CD14-positive monocyte (primary cell): ENCODE measurements at regions of chr9 and their contacts with region 1.

Region 1: DNA sequence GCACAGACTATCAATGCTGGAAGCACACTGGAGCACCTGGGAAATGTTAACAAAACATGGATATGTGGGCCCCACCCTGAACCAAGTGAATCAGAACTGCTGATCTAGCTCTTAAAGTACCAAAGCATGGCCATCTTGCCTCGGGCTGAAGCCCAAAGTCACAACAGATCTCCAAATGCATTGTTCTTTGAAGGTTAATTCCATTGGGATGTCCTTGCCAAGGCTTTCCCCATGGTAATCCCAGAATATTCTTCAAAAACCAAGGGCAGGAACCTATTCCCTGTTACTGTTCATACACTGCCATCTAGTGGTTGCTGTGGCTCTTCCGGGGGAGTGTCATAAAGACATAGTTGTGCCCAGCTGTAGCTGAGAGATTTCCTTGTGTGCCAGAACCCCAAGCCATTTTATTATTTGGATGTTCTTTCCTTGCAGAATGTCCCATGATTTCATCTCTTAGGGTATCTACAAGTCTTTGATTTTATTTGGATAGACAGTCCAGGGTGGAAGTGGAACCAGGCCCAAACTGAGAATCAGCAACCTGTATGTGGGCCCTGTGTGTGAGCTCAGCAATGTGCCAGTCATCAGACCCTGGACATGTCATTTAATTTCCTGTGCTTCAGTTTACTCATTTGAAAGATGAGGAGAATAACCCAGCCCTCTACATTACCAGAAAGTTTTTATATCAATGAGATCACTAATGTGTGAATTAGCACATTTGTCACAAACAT is 290.0 kb downstream of the ACTL7B start:
- DNase-seq: peak; percentile 49 to 78 (median 70)
- H3K4me3 ChIP-seq: no peak overlapping the region
- H3K4me3 Mint-ChIP-seq: no peak overlapping the region
- H3K27ac ChIP-seq: no peak overlapping the region
- H3K27ac Mint-ChIP-seq: peak overlapping the region in 3 of 7 donors; percentile 15 to 37 (median 17)
- H3K4me1 ChIP-seq: no peaks in the 10 kb centered on the region
- H3K4me1 Mint-ChIP-seq: peaks cover 12% of the 10 kb centered on the region
- H3K27me3 ChIP-seq: no peaks in the 10 kb centered on the region
- H3K27me3 Mint-ChIP-seq: peaks cover 0 to 5% (median 3%) of the 10 kb centered on the region in 3 donors
- CTCF ChIP-seq: peak; percentile 94

Region 2: DNA sequence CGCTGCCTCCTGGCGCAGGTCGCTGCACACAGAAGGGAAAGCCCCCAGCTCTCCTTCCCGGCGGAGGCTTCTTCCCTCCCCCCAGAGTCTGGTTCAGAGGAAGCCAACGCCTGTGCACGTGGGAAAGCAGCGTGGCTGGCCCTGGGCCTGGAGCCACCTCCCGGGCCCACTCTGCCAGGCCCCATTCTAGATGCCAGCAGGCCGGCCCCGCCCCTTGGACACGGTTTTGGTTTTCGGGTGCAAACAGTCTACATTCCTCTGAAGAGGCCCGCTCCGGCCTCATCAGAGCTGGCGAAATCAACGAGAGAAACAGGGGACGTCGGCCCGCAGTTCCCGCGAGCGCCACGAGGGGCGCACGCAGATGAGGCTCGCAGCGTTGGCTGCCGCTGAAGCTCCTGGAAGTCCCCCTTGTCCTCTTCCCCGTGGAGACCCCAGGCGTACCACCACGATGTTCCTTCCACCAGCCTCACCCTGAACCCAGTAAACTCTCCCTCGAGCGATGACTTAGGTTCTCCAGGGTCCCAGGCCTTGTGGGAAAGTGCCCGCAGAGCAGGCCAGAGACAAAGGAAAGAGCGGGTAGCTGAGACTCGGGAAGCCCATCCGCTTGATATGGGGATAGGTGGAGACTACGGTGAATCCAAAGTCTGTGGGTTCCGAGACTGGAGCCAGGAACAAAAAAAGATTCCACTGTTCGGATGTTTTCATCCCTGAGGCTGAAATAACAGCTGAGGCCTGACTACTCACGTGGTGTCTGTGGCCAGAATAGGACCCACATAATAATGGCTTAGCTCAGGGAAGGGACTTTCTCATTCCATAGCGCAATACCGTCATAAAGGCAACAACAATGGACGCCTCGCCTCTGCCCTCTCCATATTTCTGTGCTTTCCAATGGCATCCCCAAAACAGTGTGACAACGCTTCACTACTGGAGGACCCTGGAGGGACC is 1140.4 kb before region 1 on chr9:
- intact Hi-C with region 1: loop called in 1 of 2 experiments (anchors 10 kb)
- DNase-seq: peak; percentile 43 to 56 (median 56)
- H3K4me3 ChIP-seq: peak overlapping the region; percentile 1 to 74 (median 33)
- H3K4me3 Mint-ChIP-seq: peak overlapping the region; percentile 77 to 87
- H3K27ac ChIP-seq: no peak overlapping the region
- H3K27ac Mint-ChIP-seq: peak overlapping the region in 2 of 7 donors; percentile 35 to 46
- H3K4me1 ChIP-seq: peaks cover 5 to 9% of the 10 kb centered on the region in 2 donors
- H3K4me1 Mint-ChIP-seq: peaks cover 8% of the 10 kb centered on the region
- H3K27me3 ChIP-seq: no peaks in the 10 kb centered on the region
- H3K27me3 Mint-ChIP-seq: peaks cover 2 to 6% (median 3%) of the 10 kb centered on the region in 3 donors
- CTCF ChIP-seq: peak; percentile 98

Region 3: GRCh38 chr9:107465467-107466451 is 1100.1 kb before region 1 on chr9:
- intact Hi-C with region 1: loop called (anchors 5 kb)
- DNase-seq: peak; percentile 69 to 82 (median 78)
- H3K4me3 ChIP-seq: peak overlapping the region; percentile 71 to 95 (median 89)
- H3K4me3 Mint-ChIP-seq: peak overlapping the region; percentile 87 to 93
- H3K27ac ChIP-seq: peak overlapping the region in 1 of 2 donors; percentile 79
- H3K27ac Mint-ChIP-seq: peak overlapping the region in 6 of 7 donors; percentile 77 to 93 (median 81)
- H3K4me1 ChIP-seq: peaks cover 10 to 18% of the 10 kb centered on the region in 2 donors
- H3K4me1 Mint-ChIP-seq: peaks cover 18% of the 10 kb centered on the region
- H3K27me3 ChIP-seq: no peaks in the 10 kb centered on the region
- H3K27me3 Mint-ChIP-seq: peaks cover 5 to 14% (median 11%) of the 10 kb centered on the region in 3 donors
- CTCF ChIP-seq: peak; percentile 98

Region 4: GRCh38 chr9:107472581-107473340 is 1093.1 kb before region 1 on chr9:
- intact Hi-C with region 1: loop called (anchors 5 kb)
- DNase-seq: no peak
- H3K4me3 ChIP-seq: no peak overlapping the region
- H3K4me3 Mint-ChIP-seq: no peak overlapping the region
- H3K27ac ChIP-seq: no peak overlapping the region
- H3K27ac Mint-ChIP-seq: no peak overlapping the region
- H3K4me1 ChIP-seq: peaks cover 11 to 22% of the 10 kb centered on the region in 2 donors
- H3K4me1 Mint-ChIP-seq: peaks cover 23% of the 10 kb centered on the region
- H3K27me3 ChIP-seq: no peaks in the 10 kb centered on the region
- H3K27me3 Mint-ChIP-seq: peaks cover 0 to 4% (median 0%) of the 10 kb centered on the region in 3 donors
- CTCF ChIP-seq: no peak

Region 5: DNA sequence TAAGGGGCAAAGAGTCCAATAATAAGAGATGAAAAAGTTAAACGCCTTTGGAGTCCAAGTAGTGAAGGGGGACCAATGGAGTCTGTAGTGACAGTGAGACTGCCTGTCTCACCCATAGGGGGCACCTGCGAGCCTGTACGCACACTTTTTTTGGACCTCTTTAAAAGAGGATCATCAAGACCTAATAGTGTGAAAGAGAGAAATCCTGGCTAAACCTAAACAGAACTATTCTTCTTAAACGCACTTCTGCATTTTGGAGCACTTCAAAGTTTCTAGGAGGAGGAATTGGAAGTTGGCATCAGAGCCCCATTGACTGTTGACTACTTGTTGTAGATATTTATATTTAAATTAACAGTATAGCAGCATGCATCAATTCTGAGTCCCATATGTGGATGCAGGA is 440.2 kb before region 1 on chr9:
- intact Hi-C with region 1: no loop called
- DNase-seq: peak; percentile 4 to 25 (median 20)
- H3K4me3 ChIP-seq: no peak overlapping the region
- H3K4me3 Mint-ChIP-seq: no peak overlapping the region
- H3K27ac ChIP-seq: no peak overlapping the region
- H3K27ac Mint-ChIP-seq: no peak overlapping the region
- H3K4me1 ChIP-seq: peaks cover 0 to 4% of the 10 kb centered on the region in 2 donors
- H3K4me1 Mint-ChIP-seq: peaks cover 8% of the 10 kb centered on the region
- H3K27me3 ChIP-seq: no peaks in the 10 kb centered on the region
- H3K27me3 Mint-ChIP-seq: peaks cover 0 to under 1% (median 0%) of the 10 kb centered on the region in 3 donors
- CTCF ChIP-seq: peak; percentile 32

Region 6: DNA sequence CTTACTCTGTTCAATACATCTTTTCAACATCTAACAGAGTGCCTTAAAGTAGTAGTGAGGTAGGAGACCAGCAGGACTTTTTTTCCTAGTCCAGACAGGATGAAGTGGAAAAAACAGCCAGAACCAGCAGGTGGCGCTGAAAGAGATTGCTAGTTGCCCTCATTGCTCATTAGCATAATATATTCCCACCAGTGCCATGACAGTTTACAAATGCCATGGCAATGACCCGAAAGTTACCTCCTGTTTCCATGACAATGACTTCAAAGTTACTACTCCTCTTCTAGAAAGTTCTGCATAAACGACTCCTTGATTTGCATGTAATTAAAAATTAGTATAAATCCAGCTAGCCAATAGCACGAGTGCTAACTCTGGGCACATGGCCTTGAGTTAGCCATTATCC is 97.4 kb before region 1 on chr9:
- intact Hi-C with region 1: loop called in 1 of 2 experiments (anchors 5 kb)
- DNase-seq: peak; percentile 12 to 47 (median 45)
- H3K4me3 ChIP-seq: peak overlapping the region in 1 of 3 experiments; percentile 1
- H3K4me3 Mint-ChIP-seq: no peak overlapping the region
- H3K27ac ChIP-seq: no peak overlapping the region
- H3K27ac Mint-ChIP-seq: peak overlapping the region in 1 of 7 donors; percentile 20
- H3K4me1 ChIP-seq: peaks cover 20 to 21% of the 10 kb centered on the region in 2 donors
- H3K4me1 Mint-ChIP-seq: peaks cover 25% of the 10 kb centered on the region
- H3K27me3 ChIP-seq: no peaks in the 10 kb centered on the region
- H3K27me3 Mint-ChIP-seq: peaks cover 0 to 10% (median 0%) of the 10 kb centered on the region in 3 donors
- CTCF ChIP-seq: peak; percentile 47

Region 7: GRCh38 chr9:108609227-108609896 is 43.5 kb after region 1 on chr9:
- intact Hi-C with region 1: no loop called
- DNase-seq: no peak
- H3K4me3 ChIP-seq: no peak overlapping the region
- H3K4me3 Mint-ChIP-seq: no peak overlapping the region
- H3K27ac ChIP-seq: no peak overlapping the region
- H3K27ac Mint-ChIP-seq: no peak overlapping the region
- H3K4me1 ChIP-seq: no peaks in the 10 kb centered on the region
- H3K4me1 Mint-ChIP-seq: peaks cover 6% of the 10 kb centered on the region
- H3K27me3 ChIP-seq: no peaks in the 10 kb centered on the region
- H3K27me3 Mint-ChIP-seq: peaks cover 0 to 2% (median 1%) of the 10 kb centered on the region in 3 donors
- CTCF ChIP-seq: no peak

Region 8: DNA sequence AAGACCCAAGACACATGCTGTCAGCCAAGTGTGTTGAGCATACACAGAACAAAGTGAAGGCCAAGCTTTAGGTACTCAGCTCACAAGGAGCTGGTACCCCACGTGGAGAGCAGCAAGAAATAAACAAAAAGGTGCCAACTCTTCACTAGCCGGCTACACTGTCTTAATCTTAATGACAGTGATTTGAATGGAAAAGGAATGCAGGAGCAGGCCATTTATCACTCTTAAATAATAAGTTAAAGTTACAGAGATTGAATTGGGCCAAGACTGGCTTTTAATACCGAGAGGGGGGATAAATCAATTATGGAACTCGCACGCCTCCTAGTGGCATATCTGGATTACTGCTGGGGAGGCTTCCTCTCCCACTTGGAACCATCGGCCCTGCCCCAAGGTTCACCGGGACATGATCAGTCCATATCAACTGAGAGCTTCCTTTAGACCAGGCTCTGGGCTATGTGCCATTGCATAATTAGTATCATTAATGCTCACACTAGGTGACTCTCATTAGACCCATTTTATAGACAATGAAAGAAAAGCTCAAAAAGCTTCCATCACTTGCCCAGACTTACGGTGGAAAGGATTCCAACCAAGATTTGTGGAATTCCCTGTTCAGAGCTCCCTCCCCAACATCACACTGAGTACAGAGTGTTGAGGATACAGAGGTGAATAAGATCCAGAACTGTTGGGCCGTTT is 196.0 kb after region 1 on chr9:
- intact Hi-C with region 1: loop called (anchors 10 kb)
- DNase-seq: peak; percentile 48 to 69 (median 56)
- H3K4me3 ChIP-seq: no peak overlapping the region
- H3K4me3 Mint-ChIP-seq: peak overlapping the region in 1 of 2 donors; percentile 26
- H3K27ac ChIP-seq: no peak overlapping the region
- H3K27ac Mint-ChIP-seq: peak overlapping the region in 1 of 7 donors; percentile 55
- H3K4me1 ChIP-seq: peaks cover 7 to 12% of the 10 kb centered on the region in 2 donors
- H3K4me1 Mint-ChIP-seq: peaks cover 17% of the 10 kb centered on the region
- H3K27me3 ChIP-seq: no peaks in the 10 kb centered on the region
- H3K27me3 Mint-ChIP-seq: no peaks in the 10 kb centered on the region
- CTCF ChIP-seq: peak; percentile 97